ENCODE measurements at regions of chr9 and their contacts with region 1.

Region 1: GRCh38 chr9:129823935-129824601 is at the start of gene TOR1A:
- DNase-seq: peak; percentile 83 to 96 (median 91)
- ATAC-seq: peak; percentile 87
- H3K4me3 ChIP-seq: peak within 1 kb of the TSS; percentile 64 to 87
- H3K4me3 Mint-ChIP-seq: peak within 1 kb of the TSS; percentile 89
- H3K27ac ChIP-seq: peak within 1 kb of the TSS; percentile 44 to 53
- H3K27ac Mint-ChIP-seq: peak within 1 kb of the TSS; percentile 87
- H3K4me1 ChIP-seq: peaks cover 9% of the 10 kb centered on the region
- H3K4me1 Mint-ChIP-seq: peaks cover 16% of the 10 kb centered on the region
- H3K27me3 ChIP-seq: no peaks in the 10 kb centered on the region
- H3K27me3 Mint-ChIP-seq: no peaks in the 10 kb centered on the region
- CTCF ChIP-seq: no peak
- total RNA-seq, gene TOR1A: 18.9 to 19.6 TPM

Region 2: DNA sequence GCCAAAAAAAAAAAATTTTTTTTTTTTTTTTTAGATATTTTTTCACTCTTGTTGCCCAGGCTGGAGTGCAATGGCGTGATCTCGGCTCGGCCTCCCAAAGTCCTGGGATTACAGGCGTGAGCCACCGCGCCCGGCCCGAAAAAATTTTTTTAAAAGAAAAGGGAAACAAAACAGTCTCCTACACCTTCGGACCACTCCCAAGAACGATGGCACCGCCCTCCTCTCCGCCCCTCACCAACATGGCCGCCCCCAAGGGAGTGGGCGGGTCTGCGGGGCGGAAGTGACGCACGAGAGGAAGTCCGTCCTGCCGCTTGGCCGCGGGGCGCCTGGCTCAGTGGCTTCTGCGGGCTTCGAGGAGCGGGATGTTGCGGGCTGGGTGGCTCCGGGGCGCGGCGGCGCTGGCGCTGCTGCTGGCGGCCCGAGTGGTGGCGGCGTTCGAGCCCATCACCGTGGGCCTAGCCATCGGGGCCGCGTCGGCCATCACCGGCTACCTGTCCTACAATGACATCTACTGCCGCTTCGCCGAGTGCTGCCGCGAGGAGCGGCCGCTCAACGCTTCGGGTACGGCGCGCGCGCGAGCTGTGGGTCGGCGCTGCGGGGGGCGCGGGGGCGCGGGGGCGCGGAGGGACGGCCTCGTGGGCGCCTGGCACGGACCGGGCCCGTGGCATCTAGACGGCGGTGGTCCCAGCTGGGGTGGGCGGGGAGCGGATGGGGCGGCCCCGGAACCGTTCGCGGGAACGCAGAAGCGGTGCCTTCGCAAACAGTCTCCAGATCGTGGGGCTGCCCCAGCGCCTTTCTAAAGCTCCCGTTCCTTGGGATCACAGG is 21.0 kb before region 1 on chr9 and contains the start of gene TOR1B:
- CTCF ChIA-PET with region 1: no interaction called
- POLR2A ChIA-PET with region 1: interaction called, 9 read pairs
- intact Hi-C with region 1: loop called (anchors 1 kb)
- DNase-seq: peak; percentile 88 to 99 (median 95)
- ATAC-seq: peak; percentile 95
- H3K4me3 ChIP-seq: peak within 1 kb of the TSS; percentile 81 to 96
- H3K4me3 Mint-ChIP-seq: peak within 1 kb of the TSS; percentile 90
- H3K27ac ChIP-seq: peak within 1 kb of the TSS; percentile 72 to 90
- H3K27ac Mint-ChIP-seq: peak within 1 kb of the TSS; percentile 94
- H3K4me1 ChIP-seq: peaks cover 20% of the 10 kb centered on the region
- H3K4me1 Mint-ChIP-seq: peaks cover 28% of the 10 kb centered on the region
- H3K27me3 ChIP-seq: no peaks in the 10 kb centered on the region
- H3K27me3 Mint-ChIP-seq: no peaks in the 10 kb centered on the region
- CTCF ChIP-seq: no peak
- total RNA-seq, gene TOR1B: 21.3 to 22.4 TPM

Region 3: GRCh38 chr9:129868916-129869486 is 44.9 kb after region 1 on chr9:
- CTCF ChIA-PET with region 1: no interaction called
- POLR2A ChIA-PET with region 1: interaction called, 3 read pairs
- intact Hi-C with region 1: loop called in 1 of 2 experiments (anchors 1 kb)
- DNase-seq: peak; percentile 85 to 97 (median 93)
- ATAC-seq: peak; percentile 87
- H3K4me3 ChIP-seq: peak overlapping the region; percentile 19 to 51
- H3K4me3 Mint-ChIP-seq: peak overlapping the region; percentile 65
- H3K27ac ChIP-seq: peak overlapping the region; percentile 85
- H3K27ac Mint-ChIP-seq: peak overlapping the region; percentile 95
- H3K4me1 ChIP-seq: peaks cover 80% of the 10 kb centered on the region
- H3K4me1 Mint-ChIP-seq: peaks cover 76% of the 10 kb centered on the region
- H3K27me3 ChIP-seq: no peaks in the 10 kb centered on the region
- H3K27me3 Mint-ChIP-seq: no peaks in the 10 kb centered on the region
- CTCF ChIP-seq: no peak

Region 4: GRCh38 chr9:130421802-130422276 is 597.8 kb after region 1 on chr9:
- CTCF ChIA-PET with region 1: no interaction called
- POLR2A ChIA-PET with region 1: no interaction called
- intact Hi-C with region 1: no loop called
- DNase-seq: no peak
- ATAC-seq: no peak
- H3K4me3 ChIP-seq: no peak overlapping the region
- H3K4me3 Mint-ChIP-seq: no peak overlapping the region
- H3K27ac ChIP-seq: no peak overlapping the region
- H3K27ac Mint-ChIP-seq: no peak overlapping the region
- H3K4me1 ChIP-seq: no peaks in the 10 kb centered on the region
- H3K4me1 Mint-ChIP-seq: no peaks in the 10 kb centered on the region
- H3K27me3 ChIP-seq: no peaks in the 10 kb centered on the region
- H3K27me3 Mint-ChIP-seq: peaks cover 2% of the 10 kb centered on the region
- CTCF ChIP-seq: no peak